Pancreas (tissue), 10 donors: ENCODE measurements at regions of chr19 and their contacts with region 1.

Region 1: DNA sequence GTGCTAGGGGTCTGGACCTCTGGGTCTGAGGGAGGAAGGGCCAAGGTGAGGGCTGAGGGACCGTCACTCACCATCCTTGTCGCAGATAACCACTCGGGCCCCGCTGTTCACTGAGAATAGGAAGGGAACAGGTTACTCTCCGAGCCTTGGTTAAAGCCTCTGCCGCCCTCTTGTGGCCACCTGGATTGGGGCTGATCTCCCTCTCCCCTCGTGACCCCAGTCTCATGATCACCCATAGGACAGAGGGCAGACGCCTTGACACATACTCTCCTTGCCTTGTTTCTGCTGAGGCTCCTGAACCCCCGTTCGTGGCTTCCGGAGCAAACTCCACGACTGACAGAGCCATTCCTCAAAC is 580 bp downstream of the HSD17B14 start:
- DNase-seq: peak; percentile 87 to 99 (median 94)
- ATAC-seq: peak; percentile 97 to 98 (median 98)
- H3K4me3 ChIP-seq: peak overlapping the region in 2 of 4 donors; percentile 20 to 30
- H3K27ac ChIP-seq: peak overlapping the region in 1 of 4 donors; percentile 48
- H3K4me1 ChIP-seq: no peaks in the 10 kb centered on the region
- H3K27me3 ChIP-seq: no peaks in the 10 kb centered on the region
- CTCF ChIP-seq: peak; percentile 79 to 81 (median 80)

Region 2: GRCh38 chr19:48656840-48657474 is 178.8 kb before region 1 on chr19:
- intact Hi-C with region 1: loop called in 1 of 3 experiments (anchors 10 kb)
- DNase-seq: no peak
- ATAC-seq: no peak
- H3K4me3 ChIP-seq: no peak overlapping the region
- H3K27ac ChIP-seq: no peak overlapping the region
- H3K4me1 ChIP-seq: peaks cover 0 to 7% (median 0%) of the 10 kb centered on the region in 3 donors
- H3K27me3 ChIP-seq: no peaks in the 10 kb centered on the region
- CTCF ChIP-seq: no peak